Ascending aorta (tissue), 2 donors: ENCODE measurements at regions of chr3 and their contacts with region 1.

Region 1: DNA sequence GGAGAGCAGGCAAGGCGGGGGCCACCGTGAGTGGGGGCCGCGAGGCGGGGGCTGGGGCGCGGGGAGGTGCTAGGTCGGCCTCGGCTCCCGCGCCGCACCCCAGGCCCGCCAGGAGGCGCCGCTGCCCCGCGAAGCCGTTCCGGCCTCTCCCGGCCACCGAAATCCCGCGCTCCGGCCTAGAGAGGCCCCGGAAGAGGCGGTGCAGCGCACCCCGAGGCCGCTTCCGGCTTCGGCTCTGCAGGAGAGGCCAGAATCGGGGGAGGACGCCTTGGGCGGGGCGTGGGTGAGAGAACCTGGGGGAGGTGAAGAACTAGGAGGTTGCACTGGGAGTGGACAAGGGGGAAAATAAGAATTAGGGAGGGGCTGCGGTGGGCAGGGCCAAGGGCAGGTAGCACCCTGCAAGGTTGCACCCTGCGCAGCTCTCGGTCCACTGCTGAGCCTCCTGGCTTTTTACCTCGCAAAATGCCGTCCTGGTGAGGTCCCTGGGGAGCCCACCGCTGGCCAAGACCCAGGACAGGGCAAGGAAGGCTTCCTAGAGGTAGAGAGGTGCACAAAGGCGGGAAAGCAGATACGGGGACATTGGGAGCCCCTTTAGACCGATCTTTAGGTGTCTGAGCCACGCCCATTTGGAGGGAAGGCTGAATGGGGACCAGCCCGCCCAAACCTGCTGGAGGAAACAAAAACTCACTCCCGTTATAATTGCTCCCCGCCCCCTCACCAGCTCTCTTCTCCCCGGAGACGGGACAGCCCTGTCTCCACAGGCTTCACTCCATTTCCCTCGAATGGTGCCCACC is 8.4 kb upstream of the GNAI2 start:
- DNase-seq: peak; percentile 51 to 95
- H3K4me3 ChIP-seq: peak overlapping the region; percentile 63 to 78
- H3K27ac ChIP-seq: peak overlapping the region; percentile 69 to 75
- H3K4me1 ChIP-seq: peaks cover 0 to 16% of the 10 kb centered on the region in 2 donors
- H3K27me3 ChIP-seq: no peaks in the 10 kb centered on the region
- CTCF ChIP-seq: peak; percentile 68 to 96 (median 84)

Region 2: DNA sequence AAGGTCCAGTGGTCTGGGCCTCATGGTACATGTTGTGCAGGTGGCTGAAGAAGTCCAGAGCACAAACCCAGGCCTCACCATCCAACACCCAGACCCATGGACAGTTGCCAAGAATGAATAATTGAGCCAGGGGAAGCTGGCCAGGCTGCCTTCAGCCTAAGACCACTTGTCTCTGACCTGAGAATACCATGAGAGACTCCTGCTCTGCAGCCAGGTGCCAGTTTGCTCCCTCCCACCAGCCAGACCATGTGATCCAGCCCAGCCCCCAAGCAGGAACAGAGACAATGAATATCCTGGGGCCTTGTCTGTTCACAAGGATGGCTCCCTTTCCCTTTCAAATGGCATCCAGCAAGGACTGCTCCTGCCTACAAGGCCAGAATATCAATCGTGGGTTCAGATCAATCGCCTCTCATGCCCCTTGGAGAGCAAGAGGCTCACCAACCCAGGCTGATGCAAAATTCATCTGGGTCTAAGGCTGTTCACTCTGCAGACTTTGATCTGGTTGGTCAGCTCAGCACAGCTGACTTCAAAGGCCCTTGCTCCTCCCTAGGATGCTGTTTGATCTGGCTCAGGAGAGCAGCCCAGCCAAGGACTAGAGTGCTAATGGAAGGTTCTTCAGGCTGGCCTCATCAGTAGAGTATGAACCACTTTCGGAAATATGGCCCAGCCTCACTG is 384.6 kb before region 1 on chr3:
- intact Hi-C with region 1: no loop called
- DNase-seq: no peak
- H3K4me3 ChIP-seq: no peak overlapping the region
- H3K27ac ChIP-seq: no peak overlapping the region
- H3K4me1 ChIP-seq: peaks cover 0 to 4% of the 10 kb centered on the region in 2 donors
- H3K27me3 ChIP-seq: no peaks in the 10 kb centered on the region
- CTCF ChIP-seq: no peak

Region 3: DNA sequence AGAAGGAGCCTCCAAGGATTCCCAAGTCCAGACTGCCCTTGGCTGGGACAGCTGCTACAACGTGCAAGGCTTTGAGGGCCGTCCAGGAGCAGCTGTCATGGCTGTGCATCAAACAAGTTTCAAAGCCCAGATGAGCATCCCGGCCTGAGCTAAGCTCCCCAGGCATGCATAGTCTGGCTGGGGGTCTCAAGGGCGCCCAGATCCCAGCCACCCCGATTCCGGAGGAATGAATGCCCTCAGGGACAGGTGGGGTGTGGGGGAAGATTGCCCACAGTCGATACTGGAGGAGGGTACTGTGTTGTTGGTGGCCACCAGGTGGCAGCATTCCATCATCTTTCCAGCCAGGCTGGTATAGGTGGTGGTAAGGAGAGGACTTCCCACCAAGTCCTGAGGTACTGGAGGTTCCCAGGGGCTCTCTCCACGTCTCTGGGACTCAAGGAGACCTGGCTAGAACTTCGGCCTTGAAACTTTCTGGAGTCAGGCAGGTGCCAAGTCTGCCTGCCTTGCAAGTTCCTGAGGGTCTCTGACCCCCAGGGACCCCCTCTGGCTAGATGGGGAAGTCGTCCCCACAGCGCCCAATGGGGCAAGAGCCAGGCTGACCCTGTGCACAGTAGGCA is 106.1 kb before region 1 on chr3:
- intact Hi-C with region 1: loop called (anchors 1 kb)
- DNase-seq: peak in 1 of 2 donors; percentile 82
- H3K4me3 ChIP-seq: no peak overlapping the region
- H3K27ac ChIP-seq: no peak overlapping the region
- H3K4me1 ChIP-seq: peaks cover 1 to 27% of the 10 kb centered on the region in 2 donors
- H3K27me3 ChIP-seq: no peaks in the 10 kb centered on the region
- CTCF ChIP-seq: peak; percentile 75 to 88 (median 79)

Region 4: GRCh38 chr3:50192689-50193141 is 34.9 kb before region 1 on chr3:
- intact Hi-C with region 1: loop called (anchors 1 kb)
- DNase-seq: peak in 1 of 2 donors; percentile 86
- H3K4me3 ChIP-seq: peak overlapping the region in 1 of 2 donors; percentile 39
- H3K27ac ChIP-seq: no peak overlapping the region
- H3K4me1 ChIP-seq: peaks cover 10 to 15% of the 10 kb centered on the region in 2 donors
- H3K27me3 ChIP-seq: peaks cover 18% of the 10 kb centered on the region
- CTCF ChIP-seq: peak; percentile 82 to 92 (median 91)

Region 5: GRCh38 chr3:50245831-50246516 is 18.4 kb after region 1 on chr3:
- intact Hi-C with region 1: loop called (anchors 1 kb)
- DNase-seq: peak; percentile 79 to 95
- H3K4me3 ChIP-seq: peak overlapping the region; percentile 37 to 50
- H3K27ac ChIP-seq: peak overlapping the region; percentile 88 to 92
- H3K4me1 ChIP-seq: peaks cover 51 to 88% of the 10 kb centered on the region in 2 donors
- H3K27me3 ChIP-seq: no peaks in the 10 kb centered on the region
- CTCF ChIP-seq: peak; percentile 97 to 99 (median 97)

Region 6: DNA sequence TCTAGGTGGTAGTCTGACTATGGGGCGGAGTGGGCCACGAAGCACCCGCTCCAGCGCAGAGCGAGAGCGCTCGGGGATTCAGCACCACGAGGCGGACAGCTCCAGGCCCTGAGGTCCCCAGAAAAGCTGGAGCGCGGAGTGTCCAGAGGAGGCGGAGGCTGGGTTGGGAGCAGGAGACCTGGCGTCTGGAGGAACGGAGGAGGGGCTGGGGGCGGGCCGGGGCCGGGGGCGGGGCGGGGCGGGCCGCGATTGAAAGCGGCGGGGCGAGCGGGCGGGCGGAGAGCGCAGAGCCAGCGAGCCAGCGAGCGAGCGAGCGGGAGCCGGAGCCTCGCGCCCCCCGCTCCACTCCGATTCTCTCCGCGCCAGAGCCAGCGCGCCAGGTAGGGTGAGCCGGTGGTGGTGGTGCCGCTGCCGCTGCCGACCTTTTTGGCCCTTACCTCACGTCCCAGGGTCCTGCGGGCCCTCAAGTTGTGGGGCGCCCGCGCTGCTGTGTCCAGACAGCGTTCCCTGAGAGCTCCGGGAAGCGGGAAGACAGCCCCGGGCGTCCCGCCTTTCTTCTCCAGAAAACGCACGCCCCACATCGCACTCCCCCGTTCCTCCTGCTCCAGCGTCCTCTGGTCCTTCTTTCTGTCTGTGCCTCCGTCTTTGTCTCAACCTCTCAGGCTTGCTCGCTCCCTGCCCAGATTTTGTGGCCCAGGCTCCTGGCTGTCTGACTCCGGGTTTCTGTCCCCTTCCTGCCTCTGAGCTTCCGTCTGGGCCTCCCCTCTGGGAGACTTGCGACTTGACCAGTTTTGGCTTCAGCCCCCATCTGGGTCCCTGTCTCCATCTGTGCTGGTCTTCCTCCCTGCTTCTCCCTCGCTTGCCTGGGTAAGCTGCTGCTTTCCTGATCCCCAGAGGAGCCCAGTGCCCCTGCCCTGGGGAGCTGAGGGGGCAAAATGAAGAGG is 1479.5 kb after region 1 on chr3 and contains the start of gene GRM2:
- intact Hi-C with region 1: no loop called
- DNase-seq: peak in 1 of 2 donors; percentile 69
- H3K4me3 ChIP-seq: peak within 1 kb of the TSS; percentile 33 to 61
- H3K27ac ChIP-seq: no peak within 1 kb of the TSS
- H3K4me1 ChIP-seq: no peaks in the 10 kb centered on the region
- H3K27me3 ChIP-seq: no peaks in the 10 kb centered on the region
- CTCF ChIP-seq: no peak
- total RNA-seq, gene GRM2: not detected